ENCODE measurements at regions of chr14 and their contacts with region 1.

Region 1: DNA sequence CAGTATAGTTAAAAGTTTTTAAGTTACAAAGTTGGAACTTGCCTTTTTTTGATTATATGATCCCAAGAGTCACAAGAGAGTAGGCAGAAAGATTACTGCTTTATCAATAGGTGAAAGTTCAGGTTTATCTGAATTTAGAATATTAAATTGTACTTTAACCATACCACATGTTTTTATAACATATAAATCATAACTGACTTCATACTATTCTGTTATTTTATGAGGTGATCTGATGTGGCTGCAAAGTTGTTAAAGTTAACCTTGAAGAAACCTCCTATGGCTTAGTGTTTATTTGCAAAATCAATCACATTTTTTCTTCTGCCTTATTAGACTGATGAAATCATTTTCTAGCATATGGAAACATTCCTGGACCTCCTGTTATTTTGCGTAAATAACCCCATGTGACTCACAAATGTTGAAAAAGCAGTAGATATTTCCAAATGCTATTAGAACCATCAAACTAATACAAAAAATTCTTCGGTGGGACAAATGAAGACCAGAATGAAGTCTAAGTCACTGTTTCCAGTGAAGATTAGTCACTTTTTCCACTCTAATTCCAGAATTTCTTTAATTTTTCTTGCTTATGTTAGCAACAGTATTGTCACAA is 132.1 kb downstream of the RAD51B start:
- DNase-seq: no peak
- ATAC-seq: no peak
- H3K4me3 ChIP-seq: no peak overlapping the region
- H3K27ac ChIP-seq: no peak overlapping the region
- H3K4me1 ChIP-seq: no peaks in the 10 kb centered on the region
- H3K27me3 ChIP-seq: no peaks in the 10 kb centered on the region
- CTCF ChIP-seq: no peak

Region 2: DNA sequence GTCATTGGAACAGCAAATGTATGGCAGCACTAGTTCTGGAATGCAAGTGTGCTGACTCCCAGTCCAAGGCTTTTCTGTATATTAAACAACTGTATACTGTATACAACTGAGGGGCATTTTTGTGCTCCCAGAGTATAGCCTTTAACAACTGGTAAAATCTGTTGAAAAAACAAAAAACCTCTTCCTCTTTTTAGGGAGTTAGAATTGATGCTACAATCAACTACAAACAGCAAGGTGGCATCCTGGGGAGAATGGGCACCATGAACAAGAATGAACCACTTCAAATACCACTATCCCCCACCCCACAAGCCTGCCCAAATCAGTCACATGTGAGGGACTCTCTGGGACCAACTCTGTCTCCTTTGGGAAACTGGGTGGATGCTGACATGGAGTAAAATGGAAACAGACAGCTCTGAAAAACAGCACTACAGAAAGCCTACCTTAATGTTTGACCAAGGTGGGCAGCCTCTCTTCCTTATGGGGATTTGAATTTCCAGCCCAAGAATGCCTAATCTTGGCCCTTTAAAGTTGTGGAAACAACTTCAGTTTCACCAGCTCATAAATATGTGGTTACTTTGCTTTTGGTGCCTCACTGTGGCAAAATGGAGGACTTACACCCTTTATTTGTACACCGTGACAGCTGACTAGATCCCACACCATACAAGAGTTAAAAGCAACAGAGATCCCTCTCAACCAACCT is 284.7 kb before region 1 on chr14:
- intact Hi-C with region 1: no loop called
- DNase-seq: peak in 1 of 2 donors; percentile 19
- ATAC-seq: peak; percentile 61 to 85 (median 66)
- H3K4me3 ChIP-seq: no peak overlapping the region
- H3K27ac ChIP-seq: no peak overlapping the region
- H3K4me1 ChIP-seq: peaks cover 0 to 21% (median 4%) of the 10 kb centered on the region in 9 donors
- H3K27me3 ChIP-seq: no peaks in the 10 kb centered on the region
- CTCF ChIP-seq: peak in 8 of 9 donors; percentile 29 to 71 (median 61)

Region 3: GRCh38 chr14:67908052-67908754 is 43.4 kb before region 1 on chr14:
- intact Hi-C with region 1: no loop called
- DNase-seq: no peak
- ATAC-seq: no peak
- H3K4me3 ChIP-seq: no peak overlapping the region
- H3K27ac ChIP-seq: no peak overlapping the region
- H3K4me1 ChIP-seq: peaks cover 0 to 11% (median 0%) of the 10 kb centered on the region in 9 donors
- H3K27me3 ChIP-seq: no peaks in the 10 kb centered on the region
- CTCF ChIP-seq: no peak

Region 4: GRCh38 chr14:68210729-68211299 is 259.2 kb after region 1 on chr14:
- intact Hi-C with region 1: loop called in 1 of 10 experiments (anchors 10 kb)
- DNase-seq: peak in 1 of 2 donors; percentile 25
- ATAC-seq: peak in 7 of 8 donors; percentile 69 to 85 (median 74)
- H3K4me3 ChIP-seq: peak overlapping the region in 6 of 10 donors; percentile 4 to 34 (median 18)
- H3K27ac ChIP-seq: peak overlapping the region; percentile 9 to 81 (median 55)
- H3K4me1 ChIP-seq: peaks cover 0 to 55% (median 30%) of the 10 kb centered on the region in 9 donors
- H3K27me3 ChIP-seq: no peaks in the 10 kb centered on the region
- CTCF ChIP-seq: no peak

Region 5: DNA sequence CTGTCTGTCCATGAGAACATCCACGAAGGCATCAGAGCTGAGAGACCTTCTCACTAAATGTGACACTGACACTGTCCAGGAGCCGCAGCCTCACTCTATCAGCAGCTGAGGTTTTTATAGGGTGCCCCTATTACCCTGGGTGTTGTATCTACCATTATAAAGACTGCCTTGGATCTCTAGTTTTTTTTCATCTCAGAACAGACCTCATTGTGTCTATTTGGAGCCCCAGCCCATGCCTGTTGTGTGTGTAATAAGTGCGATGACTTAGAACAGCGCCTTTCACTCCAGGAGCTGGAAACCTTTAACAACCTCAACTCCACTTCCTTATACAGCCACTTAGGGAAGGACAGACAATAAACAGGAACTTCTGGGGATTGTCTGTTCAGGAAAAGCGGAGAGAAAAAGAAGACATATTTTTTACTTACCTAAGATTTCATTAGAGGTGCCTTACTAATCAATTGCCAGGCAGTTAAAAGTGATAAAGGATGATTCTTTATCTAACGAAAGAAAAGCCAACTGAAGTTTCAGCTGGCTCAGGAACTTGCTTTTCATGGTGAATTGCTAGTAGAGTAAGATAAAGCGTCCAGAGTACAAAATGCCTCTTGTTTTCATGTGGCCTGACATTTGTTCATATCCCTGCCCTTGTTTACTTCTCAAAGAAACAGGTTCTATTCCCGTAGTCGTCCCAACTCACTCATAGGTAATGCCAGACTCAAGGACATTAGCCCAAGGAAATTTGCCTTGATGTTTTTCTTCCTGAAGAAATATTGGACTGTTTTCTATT is 288.5 kb after region 1 on chr14:
- intact Hi-C with region 1: loop called in 3 of 10 experiments (anchors 5 to 10 kb)
- DNase-seq: no peak
- ATAC-seq: peak in 7 of 8 donors; percentile 16 to 68 (median 46)
- H3K4me3 ChIP-seq: no peak overlapping the region
- H3K27ac ChIP-seq: peak overlapping the region in 8 of 10 donors; percentile 13 to 72 (median 49)
- H3K4me1 ChIP-seq: peaks cover 8 to 49% (median 34%) of the 10 kb centered on the region in 9 donors
- H3K27me3 ChIP-seq: no peaks in the 10 kb centered on the region
- CTCF ChIP-seq: no peak

Measured in heart right ventricle (tissue), 16 donors.